ENCODE measurements at regions of chr4 and their contacts with region 1.

Region 1: GRCh38 chr4:74320559-74321118 is 12.4 kb downstream of the EPGN start:
- DNase-seq: peak; percentile 63
- H3K4me3 ChIP-seq: no peak overlapping the region
- H3K27ac ChIP-seq: no peak overlapping the region
- H3K4me1 ChIP-seq: no peaks in the 10 kb centered on the region
- H3K27me3 ChIP-seq: no peaks in the 10 kb centered on the region
- CTCF ChIP-seq: peak; percentile 59

Region 2: DNA sequence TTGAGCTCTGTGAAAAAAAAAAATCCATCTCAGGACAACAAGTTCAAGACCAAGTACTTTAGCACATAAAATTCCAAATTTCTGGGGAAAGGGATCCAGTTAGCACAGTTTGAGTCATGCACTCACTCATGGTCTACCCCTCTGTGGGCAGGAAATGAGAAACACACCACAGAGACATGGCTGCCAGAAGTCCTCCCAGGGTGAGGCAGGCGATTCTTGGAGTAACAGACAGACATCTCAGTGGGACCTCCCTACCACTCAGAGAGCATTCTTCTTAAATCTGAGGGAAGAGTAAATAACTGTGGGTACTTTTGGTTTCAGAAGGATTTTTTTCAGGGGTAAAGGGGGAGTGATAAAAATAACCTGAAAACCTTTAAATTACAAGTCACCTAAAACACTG is 437.3 kb before region 1 on chr4:
- CTCF ChIA-PET with region 1: no interaction called
- POLR2A ChIA-PET with region 1: no interaction called
- intact Hi-C with region 1: no loop called
- DNase-seq: peak; percentile 57
- H3K4me3 ChIP-seq: no peak overlapping the region
- H3K27ac ChIP-seq: no peak overlapping the region
- H3K4me1 ChIP-seq: peaks cover 28% of the 10 kb centered on the region
- H3K27me3 ChIP-seq: no peaks in the 10 kb centered on the region
- CTCF ChIP-seq: no peak

Region 3: GRCh38 chr4:74189331-74190043 is 131.2 kb before region 1 on chr4:
- CTCF ChIA-PET with region 1: interaction called, 12 read pairs
- POLR2A ChIA-PET with region 1: no interaction called
- intact Hi-C with region 1: no loop called
- DNase-seq: peak; percentile 52
- H3K4me3 ChIP-seq: no peak overlapping the region
- H3K27ac ChIP-seq: no peak overlapping the region
- H3K4me1 ChIP-seq: no peaks in the 10 kb centered on the region
- H3K27me3 ChIP-seq: no peaks in the 10 kb centered on the region
- CTCF ChIP-seq: peak; percentile 61